ENCODE measurements at regions of chr7 and their contacts with region 1.

Region 1: DNA sequence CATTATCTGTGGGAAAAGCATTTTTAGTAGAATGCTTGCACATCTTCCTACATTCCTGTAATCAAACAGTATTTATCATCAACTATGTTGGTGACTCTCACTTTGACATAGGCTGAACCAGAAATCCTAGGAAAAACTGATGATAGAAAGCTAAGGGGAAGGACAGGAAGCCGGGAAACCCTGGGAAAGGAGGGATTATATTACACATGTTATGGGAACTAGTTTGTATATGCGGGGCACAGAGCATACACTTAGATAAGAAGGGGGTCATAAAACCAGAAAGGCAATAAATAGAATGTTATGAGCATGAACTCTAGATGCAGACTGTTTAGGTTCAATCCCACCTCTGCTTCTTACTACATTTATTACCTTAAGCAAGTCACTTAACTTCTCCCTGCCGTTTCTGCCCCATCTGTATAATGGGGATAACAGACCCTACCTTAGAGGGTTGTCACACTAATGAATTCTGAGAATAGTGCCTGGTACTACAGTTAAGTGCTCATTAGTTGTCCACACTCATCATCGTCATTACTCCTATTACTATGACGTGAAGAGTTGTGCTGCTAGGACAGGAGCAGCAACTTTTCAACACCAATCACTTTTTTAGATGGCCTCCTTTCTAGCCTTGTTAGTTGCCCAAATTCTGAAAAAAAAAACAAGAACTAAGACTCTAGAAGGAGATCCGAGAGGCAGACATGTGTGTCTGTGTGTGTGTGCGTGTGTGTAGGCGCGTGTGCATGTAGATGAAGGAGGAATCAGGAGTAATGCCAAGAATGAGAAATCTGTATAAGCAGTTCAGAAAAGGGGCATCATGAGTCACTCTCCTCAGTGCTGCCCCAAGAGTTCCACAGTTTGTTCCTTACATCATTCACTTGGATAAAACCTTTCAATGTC is 52.2 kb downstream of the KMT2C start:
- DNase-seq: peak in 1 of 14 experiments; percentile 26
- ATAC-seq: no peak
- H3K4me3 ChIP-seq: no peak overlapping the region
- H3K4me3 Mint-ChIP-seq: no peak overlapping the region
- H3K27ac ChIP-seq: no peak overlapping the region
- H3K27ac Mint-ChIP-seq: no peak overlapping the region
- H3K4me1 ChIP-seq: peaks cover 9% of the 10 kb centered on the region
- H3K4me1 Mint-ChIP-seq: peaks cover 28% of the 10 kb centered on the region
- H3K27me3 ChIP-seq: no peaks in the 10 kb centered on the region
- H3K27me3 Mint-ChIP-seq: no peaks in the 10 kb centered on the region
- CTCF ChIP-seq: no peak

Region 2: GRCh38 chr7:152424348-152425108 is 40.9 kb after region 1 on chr7:
- CTCF ChIA-PET with region 1: no interaction called
- POLR2A ChIA-PET with region 1: no interaction called
- intact Hi-C with region 1: loop called in 1 of 2 experiments (anchors 5 kb)
- DNase-seq: no peak
- ATAC-seq: no peak
- H3K4me3 ChIP-seq: no peak overlapping the region
- H3K4me3 Mint-ChIP-seq: no peak overlapping the region
- H3K27ac ChIP-seq: no peak overlapping the region
- H3K27ac Mint-ChIP-seq: no peak overlapping the region
- H3K4me1 ChIP-seq: peaks cover 32% of the 10 kb centered on the region
- H3K4me1 Mint-ChIP-seq: peaks cover 75% of the 10 kb centered on the region
- H3K27me3 ChIP-seq: no peaks in the 10 kb centered on the region
- H3K27me3 Mint-ChIP-seq: no peaks in the 10 kb centered on the region
- CTCF ChIP-seq: no peak

Region 3: GRCh38 chr7:152967958-152968357 is 584.4 kb after region 1 on chr7:
- CTCF ChIA-PET with region 1: no interaction called
- POLR2A ChIA-PET with region 1: no interaction called
- intact Hi-C with region 1: no loop called
- DNase-seq: no peak
- ATAC-seq: no peak
- H3K4me3 ChIP-seq: no peak overlapping the region
- H3K4me3 Mint-ChIP-seq: no peak overlapping the region
- H3K27ac ChIP-seq: no peak overlapping the region
- H3K27ac Mint-ChIP-seq: no peak overlapping the region
- H3K4me1 ChIP-seq: no peaks in the 10 kb centered on the region
- H3K4me1 Mint-ChIP-seq: no peaks in the 10 kb centered on the region
- H3K27me3 ChIP-seq: no peaks in the 10 kb centered on the region
- H3K27me3 Mint-ChIP-seq: no peaks in the 10 kb centered on the region
- CTCF ChIP-seq: no peak